Heart left ventricle (tissue), 16 donors: ENCODE measurements at regions of chr4 and their contacts with region 1.

Region 1: DNA sequence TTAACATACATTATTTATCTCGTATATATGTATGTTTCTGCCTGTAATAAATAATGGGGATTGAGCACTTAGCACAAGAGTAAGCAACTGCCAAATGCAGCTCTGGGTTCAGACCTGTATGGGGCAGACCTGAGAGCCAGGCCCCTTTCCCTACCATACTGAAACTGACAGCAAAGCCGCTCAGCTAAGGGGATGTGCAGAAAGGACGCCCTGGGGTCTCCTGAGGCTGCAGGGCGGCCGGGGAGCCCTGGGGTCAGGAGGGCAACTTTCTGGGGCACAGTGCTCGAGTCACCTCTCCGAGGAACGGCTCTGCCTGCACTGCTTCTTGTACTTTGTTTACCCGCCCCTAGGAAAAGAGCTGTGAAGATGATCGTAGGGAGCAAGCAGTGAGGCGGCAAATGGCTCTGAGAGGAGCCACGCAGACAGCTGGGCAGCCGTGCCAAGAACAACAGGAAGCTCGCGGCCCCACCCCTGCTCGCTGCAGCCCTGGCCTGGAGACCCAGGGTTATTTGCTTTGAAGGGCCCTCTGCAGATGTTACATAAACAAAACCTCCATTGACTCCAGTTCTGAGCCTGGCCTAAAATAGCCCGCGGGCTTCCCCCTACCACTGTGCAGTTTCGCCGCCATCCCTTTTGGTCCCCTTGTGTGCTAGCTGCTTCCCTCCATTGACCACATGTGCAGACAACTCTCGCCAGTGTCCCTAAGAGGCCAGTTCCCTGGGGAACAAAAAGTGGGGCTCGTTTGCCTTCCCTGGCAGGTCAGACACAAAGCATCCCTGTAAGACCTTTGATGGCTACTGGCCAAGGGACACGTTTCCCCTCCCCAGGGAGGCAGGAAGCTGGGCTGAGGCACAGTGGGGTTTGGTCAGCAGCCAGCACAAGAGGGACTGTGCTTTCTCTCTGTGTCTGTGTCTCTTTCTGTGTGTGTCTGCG is 111.3 kb upstream of the LNX1 start:
- DNase-seq: peak; percentile 86 to 93 (median 88)
- ATAC-seq: peak; percentile 84 to 97 (median 96)
- H3K4me3 ChIP-seq: peak overlapping the region in 10 of 12 donors; percentile 8 to 43 (median 34)
- H3K27ac ChIP-seq: peak overlapping the region; percentile 39 to 78 (median 68)
- H3K4me1 ChIP-seq: peaks cover 6 to 40% (median 25%) of the 10 kb centered on the region in 12 donors
- H3K27me3 ChIP-seq: no peaks in the 10 kb centered on the region
- CTCF ChIP-seq: peak in 1 of 12 donors; percentile 24
- POLR2A ChIP-seq: no peak

Region 2: DNA sequence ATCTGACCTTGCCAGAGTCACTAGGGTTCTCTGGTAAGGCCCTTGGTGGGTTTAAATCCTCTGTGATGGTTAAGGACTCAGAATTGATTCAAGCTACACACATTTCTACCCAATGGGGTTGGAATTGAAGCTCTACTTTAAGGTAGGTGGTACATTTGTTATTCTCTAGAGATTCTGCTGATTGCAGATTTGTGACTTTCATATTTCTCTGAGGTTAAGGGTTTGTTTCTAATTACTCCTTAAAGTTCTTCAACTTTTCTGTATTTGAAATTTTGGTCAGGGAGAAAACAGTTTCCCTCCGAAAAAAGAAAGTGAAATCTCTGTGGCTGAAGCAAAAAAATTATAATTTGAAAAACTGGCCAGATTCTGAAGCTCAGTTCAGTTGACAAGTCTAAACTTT is 1017.7 kb before region 1 on chr4:
- intact Hi-C with region 1: no loop called
- DNase-seq: no peak
- ATAC-seq: no peak
- H3K4me3 ChIP-seq: no peak overlapping the region
- H3K27ac ChIP-seq: no peak overlapping the region
- H3K4me1 ChIP-seq: peaks cover 0 to 10% (median 0%) of the 10 kb centered on the region in 12 donors
- H3K27me3 ChIP-seq: no peaks in the 10 kb centered on the region
- CTCF ChIP-seq: no peak
- POLR2A ChIP-seq: no peak

Region 3: DNA sequence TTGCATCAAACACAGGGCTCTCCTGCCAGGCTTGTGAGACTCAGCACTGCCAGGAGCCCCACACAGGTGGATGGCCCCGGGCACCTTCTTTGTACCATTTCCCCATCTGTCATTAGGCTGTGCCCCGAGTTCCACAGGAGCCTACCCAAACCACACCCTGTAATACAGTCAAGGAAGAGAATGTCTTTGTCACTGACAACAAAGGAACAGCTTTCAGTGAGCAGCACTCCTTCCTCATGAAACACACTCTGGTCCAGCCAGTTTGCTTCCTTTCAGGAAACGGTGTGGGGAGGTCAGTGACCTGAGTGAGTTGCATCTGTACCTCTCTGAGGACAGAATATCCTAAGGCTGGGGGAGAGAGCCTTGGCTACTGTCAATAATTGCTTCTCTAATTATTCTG is 165.0 kb before region 1 on chr4:
- intact Hi-C with region 1: loop called in 3 of 10 experiments (anchors 5 to 10 kb)
- DNase-seq: peak in 1 of 5 donors; percentile 32
- ATAC-seq: peak; percentile 12 to 64 (median 38)
- H3K4me3 ChIP-seq: no peak overlapping the region
- H3K27ac ChIP-seq: peak overlapping the region in 7 of 12 donors; percentile 2 to 77 (median 45)
- H3K4me1 ChIP-seq: peaks cover 0 to 37% (median 13%) of the 10 kb centered on the region in 12 donors
- H3K27me3 ChIP-seq: no peaks in the 10 kb centered on the region
- CTCF ChIP-seq: no peak
- POLR2A ChIP-seq: no peak

Region 4: DNA sequence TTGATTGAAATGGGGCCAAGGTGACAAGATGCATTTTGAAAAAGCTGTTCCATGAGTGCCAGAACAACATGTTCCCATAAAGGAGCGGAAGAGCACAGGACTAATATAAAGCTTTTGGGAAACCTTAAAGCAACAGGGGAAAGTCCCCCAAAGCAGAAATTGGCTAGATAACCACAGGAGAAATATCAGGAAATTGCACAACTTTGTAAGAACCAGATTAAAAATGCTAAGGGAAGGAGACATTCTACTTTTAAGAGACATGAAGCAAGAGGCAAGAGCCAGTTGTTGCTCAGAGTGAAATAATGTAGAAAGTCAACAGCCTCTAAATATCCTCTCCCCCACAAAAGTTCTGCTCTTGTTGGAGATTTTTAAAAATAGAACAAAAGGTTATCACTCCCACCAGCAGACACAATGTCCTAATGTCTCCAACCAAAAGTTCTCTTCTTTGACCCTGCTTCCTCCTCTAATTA is 26.2 kb before region 1 on chr4:
- intact Hi-C with region 1: loop called in 1 of 10 experiments (anchors 2 kb)
- DNase-seq: no peak
- ATAC-seq: peak; percentile 43 to 75 (median 62)
- H3K4me3 ChIP-seq: no peak overlapping the region
- H3K27ac ChIP-seq: peak overlapping the region in 9 of 12 donors; percentile 21 to 62 (median 38)
- H3K4me1 ChIP-seq: peaks cover 0 to 17% (median 8%) of the 10 kb centered on the region in 12 donors
- H3K27me3 ChIP-seq: no peaks in the 10 kb centered on the region
- CTCF ChIP-seq: no peak
- POLR2A ChIP-seq: no peak

Region 5: DNA sequence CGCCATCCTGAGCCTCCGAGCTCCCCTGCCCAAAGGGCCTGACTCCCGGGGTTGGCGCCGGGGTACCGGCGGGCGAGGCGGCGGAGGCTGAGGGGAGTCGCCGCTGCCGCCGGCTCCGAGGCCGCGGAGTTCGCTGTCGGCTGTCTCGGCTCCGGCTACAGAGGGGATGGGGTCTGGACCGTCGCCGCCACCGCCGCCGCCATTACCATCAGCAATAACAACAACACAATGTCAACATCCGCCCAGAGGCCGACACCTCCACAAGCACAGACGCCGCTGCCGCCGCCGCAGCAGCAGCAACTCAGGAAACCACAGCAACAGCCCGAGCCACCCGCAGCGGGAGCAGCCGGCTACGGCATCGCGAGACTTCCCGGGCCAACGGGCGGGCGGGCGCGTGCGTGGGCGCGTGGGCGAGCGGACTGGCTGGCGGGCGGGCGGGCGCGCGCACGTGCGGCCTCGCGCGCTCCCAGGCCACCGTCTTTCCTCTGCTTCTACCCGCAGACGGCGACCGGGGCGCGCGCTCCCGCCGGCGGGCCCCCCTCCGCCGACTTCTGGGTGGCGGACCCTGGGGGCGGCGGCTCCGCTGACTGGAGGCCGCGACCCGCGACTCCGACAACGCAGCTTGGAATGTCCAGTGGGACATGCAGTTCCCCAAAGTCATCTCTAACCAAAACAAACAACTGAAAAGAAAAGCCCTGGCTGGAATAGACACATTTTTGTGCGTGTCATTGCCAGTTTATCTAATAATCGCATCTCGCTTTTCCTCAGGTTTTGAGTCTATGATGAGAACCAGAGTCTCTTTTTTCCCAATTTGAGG is 361.9 kb after region 1 on chr4 and contains the start of gene CHIC2:
- intact Hi-C with region 1: loop called in 1 of 10 experiments (anchors 10 kb)
- DNase-seq: peak; percentile 96 to 99 (median 97)
- ATAC-seq: peak; percentile 74 to 95 (median 90)
- H3K4me3 ChIP-seq: peak within 1 kb of the TSS; percentile 84 to 100 (median 96)
- H3K27ac ChIP-seq: peak within 1 kb of the TSS; percentile 86 to 97 (median 94)
- H3K4me1 ChIP-seq: peaks cover 1 to 66% (median 53%) of the 10 kb centered on the region in 12 donors
- H3K27me3 ChIP-seq: no peaks in the 10 kb centered on the region
- CTCF ChIP-seq: no peak
- POLR2A ChIP-seq: peak; percentile 83 to 94
- total RNA-seq, gene CHIC2: 5.5 to 17.3 (median 11.2) TPM

Region 6: GRCh38 chr4:54228056-54228527 is 525.5 kb after region 1 on chr4:
- intact Hi-C with region 1: loop called in 5 of 10 experiments (anchors 5 to 10 kb)
- DNase-seq: peak; percentile 74 to 86 (median 77)
- ATAC-seq: peak; percentile 63 to 74 (median 70)
- H3K4me3 ChIP-seq: peak overlapping the region in 11 of 12 donors; percentile 26 to 80 (median 53)
- H3K27ac ChIP-seq: peak overlapping the region in 10 of 12 donors; percentile 1 to 89 (median 68)
- H3K4me1 ChIP-seq: peaks cover 6 to 66% (median 53%) of the 10 kb centered on the region in 12 donors
- H3K27me3 ChIP-seq: peaks cover 48 to 98% (median 92%) of the 10 kb centered on the region in 9 donors
- CTCF ChIP-seq: peak; percentile 50 to 81 (median 74)
- POLR2A ChIP-seq: no peak